CD8-positive, alpha-beta T cell (primary cell): ENCODE measurements at regions of chr2 and their contacts with region 1.

Region 1: DNA sequence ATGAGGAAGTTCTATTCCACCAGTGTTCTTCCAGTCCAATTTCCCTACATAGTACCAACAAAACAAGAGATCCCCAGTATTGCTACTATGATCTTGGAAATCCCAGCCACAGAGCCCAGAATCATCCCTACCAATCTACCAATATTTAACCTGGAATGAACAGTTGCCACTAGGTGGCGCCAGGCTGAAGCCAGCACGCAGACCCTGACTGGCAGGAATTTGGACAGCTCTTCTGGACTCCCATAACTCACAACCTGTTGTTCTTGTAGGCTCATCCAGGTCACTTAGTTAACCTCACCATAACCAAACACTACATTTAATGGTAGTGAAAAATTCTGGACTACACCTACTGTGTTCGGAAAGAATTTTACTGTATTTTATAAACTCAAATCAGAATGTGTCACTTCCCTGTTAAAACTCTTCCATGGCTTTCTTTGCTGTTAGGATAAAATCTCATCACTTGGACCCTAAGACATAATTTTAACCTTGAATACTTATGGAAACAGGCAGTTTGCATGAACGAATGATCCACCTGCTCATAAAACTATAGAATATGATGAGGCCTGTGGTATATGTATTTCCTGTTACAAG is 59.8 kb upstream of the SLC38A11 start:
- DNase-seq: peak in 8 of 9 experiments; percentile 16 to 60 (median 48)
- ATAC-seq: no peak
- H3K4me3 ChIP-seq: no peak overlapping the region
- H3K4me3 Mint-ChIP-seq: no peak overlapping the region
- H3K27ac ChIP-seq: no peak overlapping the region
- H3K27ac Mint-ChIP-seq: no peak overlapping the region
- H3K4me1 ChIP-seq: no peaks in the 10 kb centered on the region
- H3K4me1 Mint-ChIP-seq: no peaks in the 10 kb centered on the region
- H3K27me3 ChIP-seq: peaks cover 0 to 9% of the 10 kb centered on the region in 2 experiments
- H3K27me3 Mint-ChIP-seq: peaks cover 6% of the 10 kb centered on the region
- CTCF ChIP-seq: peak; percentile 79

Region 2: GRCh38 chr2:163171786-163172531 is 1843.2 kb before region 1 on chr2:
- CTCF ChIA-PET with region 1: no interaction called
- POLR2A ChIA-PET with region 1: no interaction called
- intact Hi-C with region 1: loop called in 1 of 2 experiments (anchors 10 kb)
- DNase-seq: no peak
- ATAC-seq: no peak
- H3K4me3 ChIP-seq: no peak overlapping the region
- H3K4me3 Mint-ChIP-seq: no peak overlapping the region
- H3K27ac ChIP-seq: no peak overlapping the region
- H3K27ac Mint-ChIP-seq: no peak overlapping the region
- H3K4me1 ChIP-seq: no peaks in the 10 kb centered on the region
- H3K4me1 Mint-ChIP-seq: no peaks in the 10 kb centered on the region
- H3K27me3 ChIP-seq: no peaks in the 10 kb centered on the region
- H3K27me3 Mint-ChIP-seq: no peaks in the 10 kb centered on the region
- CTCF ChIP-seq: no peak

Region 3: DNA sequence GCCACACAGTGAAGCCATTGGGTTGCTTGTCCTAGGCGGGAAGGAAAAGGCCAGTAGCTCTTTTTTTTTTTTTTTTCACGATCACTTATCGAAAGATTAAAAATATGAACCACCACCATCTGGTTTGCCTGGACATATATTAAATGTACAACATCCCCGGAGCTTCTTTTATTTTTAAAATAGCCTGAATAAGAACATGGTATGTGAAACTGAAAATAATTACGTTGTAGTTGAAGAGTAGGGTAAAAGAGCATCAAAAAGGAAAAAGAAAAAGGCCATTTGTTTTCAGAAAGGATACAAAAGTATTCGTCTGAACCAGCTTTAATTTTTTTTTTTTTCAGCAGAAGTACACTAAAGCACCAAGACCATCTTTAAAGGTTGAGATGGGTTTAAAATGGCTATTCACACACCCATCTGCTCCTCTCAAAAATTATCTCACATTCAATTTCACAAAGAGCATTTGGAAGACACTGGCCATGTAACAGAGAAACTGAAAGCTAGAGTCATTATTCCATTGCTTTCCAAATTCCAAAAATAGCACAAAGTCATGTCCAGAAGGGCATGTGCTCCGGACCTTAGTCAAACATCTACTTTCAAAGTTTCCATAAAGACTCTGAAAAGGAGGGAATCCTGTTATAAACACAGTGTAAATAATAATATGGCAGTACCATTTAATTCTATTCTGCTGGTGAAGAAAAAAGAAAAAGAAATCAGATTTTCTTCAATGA is 105.8 kb after region 1 on chr2:
- CTCF ChIA-PET with region 1: no interaction called
- POLR2A ChIA-PET with region 1: no interaction called
- intact Hi-C with region 1: no loop called
- DNase-seq: no peak
- ATAC-seq: no peak
- H3K4me3 ChIP-seq: no peak overlapping the region
- H3K4me3 Mint-ChIP-seq: no peak overlapping the region
- H3K27ac ChIP-seq: no peak overlapping the region
- H3K27ac Mint-ChIP-seq: no peak overlapping the region
- H3K4me1 ChIP-seq: no peaks in the 10 kb centered on the region
- H3K4me1 Mint-ChIP-seq: no peaks in the 10 kb centered on the region
- H3K27me3 ChIP-seq: no peaks in the 10 kb centered on the region
- H3K27me3 Mint-ChIP-seq: no peaks in the 10 kb centered on the region
- CTCF ChIP-seq: no peak